Heart right ventricle (tissue), 16 donors: ENCODE measurements at regions of chr3 and their contacts with region 1.

Region 1: GRCh38 chr3:73848173-73848906 is 223.6 kb upstream of the PDZRN3 start:
- DNase-seq: no peak
- ATAC-seq: peak in 1 of 8 donors; percentile 57
- H3K4me3 ChIP-seq: no peak overlapping the region
- H3K27ac ChIP-seq: no peak overlapping the region
- H3K4me1 ChIP-seq: peaks cover 0 to 7% (median 0%) of the 10 kb centered on the region in 9 donors
- H3K27me3 ChIP-seq: no peaks in the 10 kb centered on the region
- CTCF ChIP-seq: peak; percentile 27 to 81 (median 68)

Region 2: DNA sequence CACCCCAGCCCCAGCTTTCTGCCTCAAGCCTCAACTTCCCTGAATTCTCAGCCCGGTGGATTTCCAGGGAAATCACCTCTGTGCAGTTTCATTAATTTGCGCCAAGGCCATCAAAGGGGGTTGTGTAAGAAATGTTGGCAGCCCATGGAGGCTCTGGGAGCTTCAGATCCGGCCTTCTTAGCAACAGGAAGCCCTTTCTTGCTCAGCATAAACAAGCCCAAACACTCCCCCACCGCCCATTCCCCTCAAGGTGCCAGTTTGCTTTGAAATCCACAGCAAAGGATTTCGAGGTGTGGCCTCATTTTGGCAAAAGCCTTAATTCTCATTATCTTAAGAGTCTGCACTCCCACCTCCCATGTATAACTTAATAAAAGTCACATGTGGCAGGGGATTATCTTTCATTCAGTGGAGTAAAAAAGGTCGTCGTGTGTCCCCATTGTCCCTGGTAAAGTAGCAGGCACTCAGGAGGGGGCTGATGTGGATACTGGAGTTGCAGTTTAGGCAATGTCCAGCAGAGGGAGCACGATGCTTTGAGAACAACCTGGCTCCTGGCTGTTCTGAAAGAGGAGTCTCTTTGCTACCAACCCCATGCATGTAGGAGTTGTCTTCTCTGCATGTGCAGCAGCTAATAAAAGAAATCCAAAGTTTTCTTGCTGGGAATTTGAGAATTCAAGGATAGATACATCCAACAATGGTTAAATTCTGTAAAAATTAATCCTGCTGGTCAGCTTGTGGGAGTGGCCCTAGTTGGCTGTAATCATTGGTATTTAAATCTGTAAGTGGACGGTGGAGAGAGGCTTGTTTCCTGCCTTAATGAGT is 747.4 kb before region 1 on chr3:
- intact Hi-C with region 1: loop called in 3 of 10 experiments (anchors 5 to 10 kb)
- DNase-seq: peak; percentile 43 to 84
- ATAC-seq: peak; percentile 66 to 91 (median 86)
- H3K4me3 ChIP-seq: no peak overlapping the region
- H3K27ac ChIP-seq: no peak overlapping the region
- H3K4me1 ChIP-seq: peaks cover 0 to 8% (median 0%) of the 10 kb centered on the region in 9 donors
- H3K27me3 ChIP-seq: no peaks in the 10 kb centered on the region
- CTCF ChIP-seq: peak; percentile 82 to 95 (median 93)

Region 3: DNA sequence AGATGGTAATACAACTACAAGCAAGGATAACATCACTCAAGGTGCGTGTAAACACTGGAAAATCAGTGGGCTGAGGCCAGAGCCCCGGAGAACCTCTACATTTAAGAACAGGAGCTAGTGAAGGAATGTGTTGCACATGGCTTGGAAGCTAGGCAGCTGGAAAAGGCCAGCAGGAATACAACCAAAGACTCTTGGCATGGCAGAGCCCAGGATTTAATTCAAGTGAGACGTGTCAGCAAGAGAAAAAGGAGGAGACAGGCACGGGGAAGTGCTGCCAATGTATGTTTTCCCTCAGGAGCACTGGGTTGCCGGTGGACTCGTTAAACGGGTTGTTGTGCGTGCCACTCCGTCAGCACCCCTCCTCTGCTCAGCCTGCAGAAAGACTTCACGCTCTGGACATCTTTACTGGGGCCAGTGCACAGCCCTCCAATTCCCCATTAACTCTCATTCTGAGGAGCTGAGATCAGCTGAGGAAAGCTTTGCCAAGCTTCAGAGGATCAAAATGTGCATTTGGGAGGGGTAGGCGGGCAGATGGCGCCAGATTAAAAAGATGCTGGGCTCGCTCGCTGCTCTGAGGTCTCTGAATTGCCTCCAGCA is 327.4 kb before region 1 on chr3:
- intact Hi-C with region 1: loop called in 1 of 10 experiments (anchors 5 kb)
- DNase-seq: peak in 1 of 2 donors; percentile 19
- ATAC-seq: peak; percentile 33 to 74 (median 64)
- H3K4me3 ChIP-seq: peak overlapping the region in 3 of 10 donors; percentile 13 to 16 (median 15)
- H3K27ac ChIP-seq: peak overlapping the region in 8 of 10 donors; percentile 32 to 62 (median 55)
- H3K4me1 ChIP-seq: peaks cover 7 to 55% (median 32%) of the 10 kb centered on the region in 9 donors
- H3K27me3 ChIP-seq: no peaks in the 10 kb centered on the region
- CTCF ChIP-seq: no peak

Region 4: DNA sequence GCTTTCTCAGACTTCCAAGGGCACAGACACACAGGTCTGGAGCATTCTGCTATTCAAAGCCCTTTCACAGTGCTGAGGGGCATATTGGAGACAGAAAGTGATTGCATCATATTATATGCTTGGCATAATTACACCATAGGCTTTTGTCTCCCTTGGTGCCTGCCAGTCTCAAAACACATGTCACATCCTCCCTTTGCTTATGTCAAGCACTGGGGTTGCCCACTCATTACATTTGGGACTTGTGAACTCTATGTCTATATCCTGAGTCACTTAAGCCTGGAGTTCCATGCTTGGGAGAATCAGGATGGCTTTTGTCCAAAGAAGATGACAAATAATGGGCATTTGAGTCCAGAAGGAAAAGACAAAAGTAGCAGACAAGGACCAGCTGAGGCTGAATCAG is 211.3 kb before region 1 on chr3:
- intact Hi-C with region 1: loop called in 1 of 10 experiments (anchors 5 kb)
- DNase-seq: no peak
- ATAC-seq: peak in 1 of 8 donors; percentile 18
- H3K4me3 ChIP-seq: no peak overlapping the region
- H3K27ac ChIP-seq: no peak overlapping the region
- H3K4me1 ChIP-seq: no peaks in the 10 kb centered on the region
- H3K27me3 ChIP-seq: no peaks in the 10 kb centered on the region
- CTCF ChIP-seq: no peak

Region 5: DNA sequence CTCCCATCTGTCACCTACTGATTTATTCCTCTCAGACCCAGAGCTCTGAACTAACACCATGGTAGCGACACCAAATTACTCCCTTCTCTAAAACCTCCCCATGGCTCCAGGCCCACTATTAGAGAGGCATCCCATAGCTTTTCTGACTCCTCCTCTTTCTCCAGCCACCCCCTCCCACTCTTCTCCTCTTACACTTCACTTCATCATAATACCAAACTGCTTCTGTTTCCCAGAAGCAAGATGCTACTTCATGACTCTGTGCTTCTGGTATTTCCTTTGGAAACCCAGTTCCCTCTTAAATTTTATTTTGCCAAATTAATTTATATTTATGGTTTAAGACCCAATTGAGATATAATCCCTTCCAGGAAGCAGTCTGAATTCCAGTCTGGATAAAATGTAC is 241.5 kb after region 1 on chr3:
- intact Hi-C with region 1: no loop called
- DNase-seq: no peak
- ATAC-seq: no peak
- H3K4me3 ChIP-seq: no peak overlapping the region
- H3K27ac ChIP-seq: no peak overlapping the region
- H3K4me1 ChIP-seq: no peaks in the 10 kb centered on the region
- H3K27me3 ChIP-seq: peaks cover 0 to 4% (median 0%) of the 10 kb centered on the region in 7 donors
- CTCF ChIP-seq: no peak